IMR-90 (cell line): ENCODE measurements at regions of chr17 and their contacts with region 1.

Region 1: DNA sequence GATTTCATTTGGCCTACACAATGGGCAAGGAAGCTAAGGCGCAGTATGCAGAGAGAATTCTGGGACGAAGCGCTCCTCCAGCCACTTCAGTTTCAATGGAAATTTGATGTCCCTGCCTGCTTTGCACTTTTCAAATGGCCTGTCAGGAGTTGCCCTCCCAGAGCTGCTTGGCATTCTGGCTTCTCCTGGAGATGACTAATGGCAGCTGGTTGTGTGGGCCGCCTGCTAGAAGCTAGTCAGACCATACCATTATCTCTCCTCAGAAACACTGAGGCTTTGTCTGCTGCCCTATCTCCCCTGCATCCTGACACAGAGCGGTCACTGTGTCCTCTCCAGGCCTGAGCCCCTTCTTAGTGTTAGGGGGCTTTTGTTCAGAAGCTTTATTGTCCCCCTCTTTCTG is 180.1 kb downstream of the SPECC1 start:
- DNase-seq: peak; percentile 68
- ATAC-seq: peak; percentile 56
- H3K4me3 ChIP-seq: no peak overlapping the region
- H3K27ac ChIP-seq: peak overlapping the region; percentile 14; the same call in 1 of the 2 replicates
- H3K4me1 ChIP-seq: peaks cover 29% of the 10 kb centered on the region
- H3K27me3 ChIP-seq: no peaks in the 10 kb centered on the region
- CTCF ChIP-seq: no peak
- POLR2A ChIP-seq: no peak
- RAD21 ChIP-seq: no peak

Region 2: DNA sequence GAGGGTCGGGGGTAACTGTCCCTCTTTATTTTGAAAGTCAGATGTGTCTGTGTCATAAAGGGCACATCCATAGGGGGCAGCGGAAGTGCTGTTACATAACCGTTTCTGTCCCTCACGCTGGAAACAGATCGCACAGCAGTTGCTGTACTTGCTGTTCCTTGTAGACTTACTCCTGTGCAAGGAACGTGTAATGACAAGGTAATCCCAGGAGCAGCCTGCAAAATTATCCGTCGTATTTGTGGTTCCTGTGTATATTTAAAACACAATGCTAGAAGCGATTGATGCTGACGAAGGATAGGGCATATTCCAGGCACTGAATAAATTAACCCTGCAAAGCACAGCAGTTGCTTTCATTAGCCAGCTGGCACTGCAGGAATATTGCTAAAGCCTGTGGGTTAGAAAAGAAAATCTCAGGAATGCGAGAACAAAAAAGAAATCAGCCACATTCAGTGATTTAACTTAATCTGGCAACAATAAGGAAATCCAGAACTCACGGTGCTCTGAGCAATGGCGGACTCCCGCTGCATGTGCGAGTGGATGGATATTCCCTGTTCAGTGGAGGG is 103.9 kb before region 1 on chr17:
- CTCF ChIA-PET with region 1: no interaction called
- POLR2A ChIA-PET with region 1: no interaction called
- dilution Hi-C with region 1: no loop called
- in situ Hi-C with region 1: no loop called
- intact Hi-C with region 1: no loop called
- DNase-seq: no peak
- ATAC-seq: no peak
- H3K4me3 ChIP-seq: no peak overlapping the region
- H3K27ac ChIP-seq: no peak overlapping the region
- H3K4me1 ChIP-seq: peaks cover 3% of the 10 kb centered on the region; the same call in 1 of the 2 replicates
- H3K27me3 ChIP-seq: peaks cover 30% of the 10 kb centered on the region
- CTCF ChIP-seq: no peak
- POLR2A ChIP-seq: no peak
- RAD21 ChIP-seq: no peak

Region 3: GRCh38 chr17:20128036-20128667 is 61.1 kb before region 1 on chr17:
- CTCF ChIA-PET with region 1: interaction called, 10 read pairs
- POLR2A ChIA-PET with region 1: no interaction called
- dilution Hi-C with region 1: no loop called
- in situ Hi-C with region 1: no loop called
- intact Hi-C with region 1: no loop called
- DNase-seq: peak; percentile 94
- ATAC-seq: peak; percentile 96
- H3K4me3 ChIP-seq: no peak overlapping the region
- H3K27ac ChIP-seq: peak overlapping the region; percentile 99; the same call in 1 of the 2 replicates
- H3K4me1 ChIP-seq: peaks cover 9% of the 10 kb centered on the region
- H3K27me3 ChIP-seq: no peaks in the 10 kb centered on the region
- CTCF ChIP-seq: no peak
- POLR2A ChIP-seq: no peak
- RAD21 ChIP-seq: 0 out of 2 replicates have a peak, but pooled peaks have one; percentile 21

Region 4: GRCh38 chr17:20141198-20141972 is 47.9 kb before region 1 on chr17:
- CTCF ChIA-PET with region 1: no interaction called
- POLR2A ChIA-PET with region 1: no interaction called
- dilution Hi-C with region 1: no loop called
- in situ Hi-C with region 1: no loop called
- intact Hi-C with region 1: loop called (anchors 5 kb)
- DNase-seq: no peak
- ATAC-seq: no peak
- H3K4me3 ChIP-seq: no peak overlapping the region
- H3K27ac ChIP-seq: no peak overlapping the region
- H3K4me1 ChIP-seq: peaks cover 4% of the 10 kb centered on the region
- H3K27me3 ChIP-seq: no peaks in the 10 kb centered on the region
- CTCF ChIP-seq: no peak
- POLR2A ChIP-seq: no peak
- RAD21 ChIP-seq: no peak

Region 5: GRCh38 chr17:20825539-20825938 is 636.2 kb after region 1 on chr17:
- CTCF ChIA-PET with region 1: no interaction called
- POLR2A ChIA-PET with region 1: no interaction called
- dilution Hi-C with region 1: no loop called
- in situ Hi-C with region 1: no loop called
- intact Hi-C with region 1: no loop called
- DNase-seq: no peak
- ATAC-seq: no peak
- H3K4me3 ChIP-seq: no peak overlapping the region
- H3K27ac ChIP-seq: no peak overlapping the region
- H3K4me1 ChIP-seq: no peaks in the 10 kb centered on the region
- H3K27me3 ChIP-seq: no peaks in the 10 kb centered on the region; the same call in 1 of the 2 replicates
- CTCF ChIP-seq: no peak
- POLR2A ChIP-seq: no peak
- RAD21 ChIP-seq: no peak